RWPE1 (cell line): ENCODE measurements at regions of chr12 and their contacts with region 1.

Region 1: GRCh38 chr12:49358483-49359141 is 8.7 kb upstream of the SPATS2 start:
- DNase-seq: no peak
- H3K27ac ChIP-seq: no peak overlapping the region
- CTCF ChIP-seq: peak; percentile 75

Region 2: DNA sequence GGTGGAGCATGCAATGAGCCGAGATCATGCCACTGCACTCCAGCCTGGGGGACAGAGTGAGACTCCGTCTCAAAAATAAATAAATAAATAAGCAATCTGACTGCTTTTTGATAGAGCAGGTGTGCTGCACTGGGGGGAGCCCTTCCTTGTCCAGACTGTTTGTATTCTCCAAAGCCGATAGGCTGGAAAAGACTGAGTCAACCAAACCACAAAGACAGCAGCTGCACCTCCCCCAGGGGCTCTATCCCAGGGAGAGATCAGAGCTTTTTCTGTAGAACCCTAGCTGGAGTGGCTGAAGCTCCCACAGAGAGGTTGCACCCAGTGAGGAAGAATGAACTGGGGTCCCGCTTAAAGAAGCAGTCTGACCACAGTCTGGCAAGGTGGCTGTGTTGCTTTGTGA is 742.9 kb before region 1 on chr12:
- CTCF ChIA-PET with region 1: no interaction called
- POLR2A ChIA-PET with region 1: no interaction called
- DNase-seq: no peak
- H3K27ac ChIP-seq: no peak overlapping the region
- CTCF ChIP-seq: no peak

Region 3: DNA sequence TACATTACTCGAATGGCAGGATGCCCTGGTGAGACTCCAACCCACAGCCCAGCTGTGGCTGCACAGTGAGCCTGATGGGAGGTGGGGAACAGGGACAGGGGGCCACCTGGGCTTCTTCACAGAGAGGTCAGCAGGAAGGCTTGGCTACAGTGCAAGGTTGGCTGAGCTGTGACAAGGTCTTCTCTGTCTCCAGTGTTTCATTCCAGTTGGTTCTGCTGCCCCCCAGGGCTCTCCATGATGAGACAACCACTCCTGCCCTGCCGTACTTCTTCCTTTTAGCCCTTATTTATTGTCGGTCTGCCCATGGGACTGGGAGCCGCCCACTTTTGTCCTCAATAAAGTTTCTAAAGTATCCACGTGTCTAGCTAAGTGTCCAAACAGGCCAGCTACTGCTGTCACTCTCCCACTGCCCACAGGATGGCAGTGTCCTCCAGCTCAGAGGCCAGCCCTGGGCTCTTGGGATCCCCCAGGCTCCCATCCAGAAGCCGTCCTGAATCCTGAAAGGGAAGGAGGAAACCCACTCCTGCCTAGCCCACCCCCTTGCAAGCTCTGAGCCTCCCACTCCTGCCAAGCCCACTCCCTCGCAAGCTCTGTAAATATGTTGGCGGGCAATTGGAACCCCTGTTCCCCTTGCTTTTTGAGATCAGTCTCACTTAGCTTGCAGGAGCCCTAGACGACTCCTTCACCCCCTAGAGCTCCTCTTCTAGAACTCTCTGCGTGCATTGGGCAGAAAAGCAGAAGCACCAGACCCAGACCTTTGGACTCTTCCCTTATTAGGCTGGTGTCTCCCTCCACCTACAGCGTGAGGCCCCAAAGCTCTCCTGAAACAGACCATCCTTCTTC is 27.0 kb before region 1 on chr12:
- CTCF ChIA-PET with region 1: interaction called, 12 read pairs
- POLR2A ChIA-PET with region 1: no interaction called
- DNase-seq: peak; percentile 72
- H3K27ac ChIP-seq: peak overlapping the region; percentile 54
- CTCF ChIP-seq: peak; percentile 85

Region 4: DNA sequence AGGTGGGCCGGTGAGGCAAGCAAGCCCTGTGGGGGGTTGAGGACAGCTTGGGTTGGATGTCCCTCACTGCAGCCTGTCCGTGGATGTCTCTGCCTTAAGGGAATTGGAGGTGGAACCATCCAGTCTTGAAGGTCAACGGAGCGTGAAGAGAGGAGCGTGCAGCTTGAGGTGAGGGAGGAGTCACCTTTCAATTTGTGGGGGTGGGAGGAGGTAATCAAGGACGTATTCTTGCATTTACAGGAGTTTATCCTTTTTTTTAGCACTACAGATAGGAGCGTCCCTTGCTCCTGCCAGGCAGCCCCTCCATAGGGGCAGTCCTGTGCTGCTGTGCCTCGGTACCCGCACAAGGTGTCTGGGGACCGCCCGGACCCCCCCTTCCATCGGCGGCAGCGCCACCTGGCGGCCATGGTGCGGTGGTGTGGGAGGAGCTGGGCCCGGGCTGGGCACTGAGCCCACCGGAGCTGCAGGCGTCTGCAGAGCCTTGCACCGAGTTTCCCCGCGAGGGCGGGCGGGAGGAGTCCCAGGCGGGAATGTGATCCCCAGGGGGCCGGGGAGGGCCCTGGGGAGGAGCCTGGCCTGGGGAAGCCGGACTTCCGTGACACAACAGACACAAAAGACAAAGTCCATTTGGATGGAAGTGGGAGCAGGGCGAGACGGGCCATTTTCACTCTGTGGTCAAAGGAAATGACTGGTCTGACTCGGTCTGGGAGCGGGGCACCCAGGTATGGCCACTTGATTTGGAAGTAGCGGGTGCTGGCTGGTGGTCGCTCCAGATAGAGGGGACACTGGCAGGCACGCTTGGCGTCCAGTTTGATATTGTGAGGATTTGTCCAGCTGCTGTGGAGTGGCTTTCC is 11.0 kb before region 1 on chr12:
- CTCF ChIA-PET with region 1: interaction called, 31 read pairs
- POLR2A ChIA-PET with region 1: no interaction called
- DNase-seq: peak; percentile 84
- H3K27ac ChIP-seq: no peak overlapping the region; the same call in 1 of the 2 replicates
- CTCF ChIP-seq: peak; percentile 96

Region 5: GRCh38 chr12:49553512-49554088 is 195.0 kb after region 1 on chr12:
- CTCF ChIA-PET with region 1: interaction called, 18 read pairs
- POLR2A ChIA-PET with region 1: no interaction called
- DNase-seq: peak; percentile 70
- H3K27ac ChIP-seq: no peak overlapping the region
- CTCF ChIP-seq: peak; percentile 60

Region 6: GRCh38 chr12:49580572-49581535 is 222.2 kb after region 1 on chr12:
- CTCF ChIA-PET with region 1: interaction called, 13 read pairs
- POLR2A ChIA-PET with region 1: no interaction called
- DNase-seq: peak; percentile 51
- H3K27ac ChIP-seq: no peak overlapping the region
- CTCF ChIP-seq: peak; percentile 73